ENCODE measurements at regions of chr11 and their contacts with region 1.

Region 1: DNA sequence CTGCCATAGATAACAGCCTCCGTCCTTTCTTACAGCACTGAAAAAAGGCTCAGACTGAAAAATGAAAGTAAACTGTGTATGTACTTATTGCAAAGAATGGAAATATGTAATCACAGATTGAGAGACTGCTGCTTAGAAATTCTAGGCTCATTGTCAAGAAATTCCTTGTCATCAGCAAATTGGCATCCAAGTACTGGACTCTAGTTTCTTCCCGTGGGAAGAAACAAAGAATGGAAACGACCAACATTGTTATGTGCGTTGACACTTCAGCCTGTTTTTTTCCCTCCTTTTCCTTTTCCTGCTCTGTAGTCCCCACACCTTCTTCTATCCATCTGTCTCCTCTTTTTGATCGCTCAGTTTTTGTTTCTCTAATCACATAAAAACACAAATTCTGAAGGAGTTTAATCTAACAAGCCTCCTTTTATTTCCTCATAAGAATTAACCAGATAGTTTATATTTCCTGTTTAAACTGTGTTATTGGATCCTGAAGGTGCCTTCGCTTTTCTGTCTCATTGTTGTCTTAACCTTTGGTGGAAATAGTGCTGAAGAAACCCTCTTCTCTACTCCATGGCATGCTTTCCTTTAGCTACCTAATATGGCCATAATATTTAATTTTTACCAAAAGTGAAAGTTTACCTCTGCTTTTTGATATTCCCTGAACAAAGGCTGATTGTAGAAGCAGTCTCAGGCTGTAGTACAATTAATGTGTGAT is 20.0 kb upstream of the CASP12 start:
- DNase-seq: no peak
- ATAC-seq: peak; percentile 79
- H3K4me3 Mint-ChIP-seq: peak overlapping the region; percentile 65
- H3K27ac Mint-ChIP-seq: peak overlapping the region; percentile 73
- H3K4me1 Mint-ChIP-seq: peaks cover 45% of the 10 kb centered on the region
- H3K27me3 Mint-ChIP-seq: no peaks in the 10 kb centered on the region

Region 2: DNA sequence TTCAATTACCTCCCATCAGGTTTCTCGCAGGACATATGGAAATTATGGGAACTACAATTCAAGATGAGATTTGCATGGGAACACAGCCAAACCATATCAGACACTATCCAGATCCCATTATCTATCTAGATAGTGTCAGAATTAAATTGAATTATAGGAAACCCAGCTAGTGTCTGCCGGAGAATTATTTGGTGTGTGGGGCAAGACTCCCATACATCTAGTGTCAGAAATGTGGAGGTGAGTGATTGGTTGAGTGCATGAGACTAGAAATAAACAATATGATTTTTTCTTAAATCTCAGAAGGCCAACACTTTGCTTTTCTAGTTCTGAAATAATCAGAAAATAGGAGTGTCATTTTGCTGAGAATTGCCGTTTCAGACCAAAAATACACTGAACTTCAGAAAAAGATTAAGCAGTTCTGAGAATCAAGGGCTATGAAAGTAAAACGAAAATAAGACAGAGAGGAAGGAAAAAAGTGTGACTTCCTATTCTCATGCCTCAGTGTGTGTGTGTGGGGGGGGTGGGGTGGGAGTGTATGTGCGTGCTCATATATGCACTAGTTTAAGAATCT is 41.3 kb before region 1 on chr11:
- CTCF ChIA-PET with region 1: no interaction called
- POLR2A ChIA-PET with region 1: interaction called, 4 read pairs
- intact Hi-C with region 1: loop called in 1 of 2 experiments (anchors 5 kb)
- DNase-seq: no peak
- ATAC-seq: peak; percentile 74
- H3K4me3 Mint-ChIP-seq: peak overlapping the region; percentile 11
- H3K27ac Mint-ChIP-seq: peak overlapping the region; percentile 86
- H3K4me1 Mint-ChIP-seq: peaks cover 27% of the 10 kb centered on the region
- H3K27me3 Mint-ChIP-seq: no peaks in the 10 kb centered on the region

Region 3: DNA sequence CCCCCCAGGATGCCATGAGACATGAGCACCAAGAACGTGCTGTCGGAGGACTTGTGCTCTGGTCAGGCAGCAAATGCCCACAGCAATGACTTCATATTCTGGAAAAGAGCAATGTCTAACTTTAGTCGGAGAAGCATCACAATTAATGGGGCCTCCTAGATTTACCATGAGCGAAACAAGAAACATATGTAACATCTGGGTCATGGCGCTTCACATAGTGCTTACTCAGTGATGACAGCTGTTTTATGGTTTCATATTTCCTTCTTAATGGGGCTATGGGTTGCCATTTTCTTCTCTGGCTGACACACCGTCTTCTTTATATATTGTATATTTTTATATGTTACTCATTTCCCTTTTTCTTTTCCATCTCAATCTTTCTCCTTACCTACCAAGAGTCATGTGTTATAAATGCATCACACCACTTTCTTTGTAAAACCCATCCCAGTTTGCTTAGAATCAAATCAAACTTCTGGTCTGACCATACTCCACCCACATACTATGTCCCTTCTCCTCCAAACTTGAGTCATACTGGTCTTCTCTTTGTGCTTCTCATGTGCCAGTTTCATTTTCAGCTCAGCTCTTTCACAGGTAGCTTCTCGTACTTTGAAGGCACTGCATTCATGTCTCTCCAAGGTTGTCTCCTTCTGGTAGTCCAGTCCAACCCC is 10.6 kb before region 1 on chr11:
- CTCF ChIA-PET with region 1: interaction called, 8 read pairs
- POLR2A ChIA-PET with region 1: no interaction called
- intact Hi-C with region 1: loop called in 1 of 2 experiments (anchors 1 kb)
- DNase-seq: peak; percentile 11
- ATAC-seq: peak; percentile 92
- H3K4me3 Mint-ChIP-seq: no peak overlapping the region
- H3K27ac Mint-ChIP-seq: peak overlapping the region; percentile 47
- H3K4me1 Mint-ChIP-seq: peaks cover 30% of the 10 kb centered on the region
- H3K27me3 Mint-ChIP-seq: no peaks in the 10 kb centered on the region

Region 4: GRCh38 chr11:104968355-104968855 is 50.1 kb after region 1 on chr11 and contains the start of gene CASP4:
- CTCF ChIA-PET with region 1: no interaction called
- POLR2A ChIA-PET with region 1: no interaction called
- intact Hi-C with region 1: loop called in 1 of 2 experiments (anchors 5 kb)
- DNase-seq: no peak
- ATAC-seq: peak; percentile 75
- H3K4me3 Mint-ChIP-seq: peak within 1 kb of the TSS; percentile 88
- H3K27ac Mint-ChIP-seq: peak within 1 kb of the TSS; percentile 96
- H3K4me1 Mint-ChIP-seq: peaks cover 25% of the 10 kb centered on the region
- H3K27me3 Mint-ChIP-seq: no peaks in the 10 kb centered on the region
- total RNA-seq, gene CASP4: 48.8 to 59.1 TPM

Region 5: DNA sequence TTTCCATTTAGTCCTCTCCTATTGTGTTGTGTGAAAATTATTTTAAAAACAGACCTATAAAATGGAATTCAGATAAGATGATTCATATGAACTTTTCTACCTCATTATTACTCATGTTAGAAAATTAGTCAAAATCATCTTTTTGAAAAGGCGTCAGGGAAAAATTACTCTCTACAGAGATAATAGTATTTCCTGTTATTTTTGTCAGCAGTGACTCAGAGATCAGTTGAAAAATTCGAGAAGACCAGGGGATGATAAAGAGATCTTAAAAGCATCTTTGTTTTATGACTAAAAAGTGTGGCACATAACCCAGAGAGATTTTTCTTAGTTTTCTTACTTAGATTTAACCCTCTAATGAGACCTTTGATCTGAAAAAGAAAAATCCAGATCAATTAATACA is 379.2 kb after region 1 on chr11:
- CTCF ChIA-PET with region 1: no interaction called
- POLR2A ChIA-PET with region 1: no interaction called
- intact Hi-C with region 1: loop called in 1 of 2 experiments (anchors 10 kb)
- DNase-seq: no peak
- ATAC-seq: peak; percentile 86
- H3K4me3 Mint-ChIP-seq: no peak overlapping the region
- H3K27ac Mint-ChIP-seq: peak overlapping the region; percentile 40
- H3K4me1 Mint-ChIP-seq: peaks cover 17% of the 10 kb centered on the region
- H3K27me3 Mint-ChIP-seq: peaks cover 17% of the 10 kb centered on the region